ENCODE measurements at regions of chr3 and their contacts with region 1.

Region 1: DNA sequence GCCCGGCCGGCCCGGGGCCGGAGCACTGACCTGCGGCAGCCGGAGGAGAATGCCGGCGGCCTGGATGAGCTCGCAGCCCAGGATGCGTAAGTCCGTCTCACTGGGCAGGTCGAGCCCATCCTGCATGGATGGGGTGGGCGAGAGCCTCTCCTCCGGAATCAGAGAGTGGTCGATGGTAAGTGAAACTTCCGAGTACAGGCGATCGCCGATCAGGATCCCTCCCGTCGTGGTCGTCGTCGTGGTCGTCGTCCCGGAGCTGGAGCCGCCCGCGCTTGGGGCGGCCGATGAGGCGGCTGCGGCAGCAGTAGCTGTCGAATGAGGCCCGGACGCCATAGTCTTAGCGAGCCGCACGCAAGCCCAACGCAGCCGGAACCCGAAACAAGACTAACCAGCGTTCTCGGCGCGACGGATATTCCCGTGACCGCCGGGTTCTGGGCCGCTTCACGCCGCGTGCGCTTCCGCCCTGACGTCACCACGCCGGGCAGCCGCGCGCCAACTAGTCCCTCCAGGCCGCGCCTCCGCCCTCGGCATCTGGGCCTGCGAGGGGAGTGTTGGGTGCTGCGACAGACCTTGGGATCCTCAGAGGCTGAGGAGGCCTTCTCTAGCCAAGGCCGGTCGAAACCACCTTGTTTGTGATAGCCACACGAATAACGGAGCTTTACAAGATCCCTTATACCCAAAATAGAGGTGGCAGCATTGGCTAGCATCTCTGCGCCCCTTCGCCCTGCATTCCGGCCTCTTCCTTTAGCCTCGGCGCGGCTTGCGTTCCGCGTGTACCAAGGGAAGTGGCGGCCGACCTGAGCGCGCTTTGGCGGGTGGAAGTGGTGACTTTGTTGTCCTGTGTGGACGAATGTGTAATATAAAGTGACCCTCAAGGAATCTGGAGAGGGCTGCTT is at the start of gene CCNL1:
- DNase-seq: peak; percentile 95 to 96
- ATAC-seq: peak; percentile 78 to 82
- H3K4me3 ChIP-seq: peak within 1 kb of the TSS; percentile 79 to 98 (median 94)
- H3K27ac ChIP-seq: peak within 1 kb of the TSS; percentile 93 to 99 (median 98)
- H3K4me1 ChIP-seq: peaks cover 48% of the 10 kb centered on the region in 2 donors
- H3K27me3 ChIP-seq: no peaks in the 10 kb centered on the region
- CTCF ChIP-seq: peak in 2 of 5 experiments; percentile 10 to 11
- POLR2A ChIP-seq: peak; percentile 99
- total RNA-seq, gene CCNL1: 34.3 to 110 (median 41.3) TPM

Region 2: DNA sequence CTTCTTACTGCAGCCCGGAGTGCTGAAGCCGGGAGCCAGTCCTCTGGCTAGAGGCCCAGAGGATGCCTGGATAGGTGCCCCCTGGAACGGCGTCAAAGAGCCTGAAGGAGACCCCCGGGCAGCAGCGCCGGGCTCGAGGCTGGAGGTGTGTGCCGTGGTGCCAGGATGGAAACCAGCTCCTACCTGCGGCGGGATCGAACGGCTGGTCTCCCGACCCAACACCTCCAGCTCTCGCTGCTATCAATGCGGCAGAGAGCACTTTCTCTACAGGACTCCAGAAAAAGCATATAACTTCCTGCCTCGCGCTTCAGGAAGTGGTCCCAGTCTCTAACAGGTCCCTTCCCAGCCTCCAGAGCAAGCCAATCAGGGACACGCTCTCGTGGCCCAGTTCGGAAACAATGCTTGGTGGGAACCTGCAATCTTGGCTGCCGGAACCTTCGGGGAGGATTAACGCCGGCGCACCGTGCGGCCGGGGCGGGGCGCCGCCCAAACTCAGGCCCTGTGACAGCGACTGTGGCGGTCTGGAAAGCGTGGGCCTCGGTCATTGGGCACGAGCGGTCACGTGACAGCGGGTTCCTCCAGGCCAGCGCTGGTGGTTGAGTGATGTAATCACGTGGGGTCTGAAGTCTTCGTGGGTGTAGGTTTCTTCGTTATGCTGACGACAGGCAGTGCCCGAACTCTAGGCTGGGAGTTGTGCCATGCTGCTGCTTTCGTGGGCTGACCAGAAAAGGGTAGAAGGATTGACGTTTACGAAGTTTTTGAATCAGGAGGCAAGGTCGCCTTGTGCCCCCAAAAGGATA is 1305.7 kb before region 1 on chr3 and contains the start of gene SLC33A1:
- in situ Hi-C with region 1: loop called in 2 of 4 experiments (anchors 25 kb)
- intact Hi-C with region 1: loop called (anchors 10 kb)
- DNase-seq: peak; percentile 99
- ATAC-seq: peak; percentile 96 to 97
- H3K4me3 ChIP-seq: peak within 1 kb of the TSS; percentile 75 to 99 (median 87)
- H3K27ac ChIP-seq: peak within 1 kb of the TSS; percentile 95 to 96 (median 95)
- H3K4me1 ChIP-seq: peaks cover 36 to 37% of the 10 kb centered on the region in 2 donors
- H3K27me3 ChIP-seq: no peaks in the 10 kb centered on the region
- CTCF ChIP-seq: peak in 3 of 5 experiments; percentile 7 to 55 (median 30)
- POLR2A ChIP-seq: peak; percentile 67 to 75
- total RNA-seq, gene SLC33A1: 7.0 to 9.3 (median 8.2) TPM

Region 3: DNA sequence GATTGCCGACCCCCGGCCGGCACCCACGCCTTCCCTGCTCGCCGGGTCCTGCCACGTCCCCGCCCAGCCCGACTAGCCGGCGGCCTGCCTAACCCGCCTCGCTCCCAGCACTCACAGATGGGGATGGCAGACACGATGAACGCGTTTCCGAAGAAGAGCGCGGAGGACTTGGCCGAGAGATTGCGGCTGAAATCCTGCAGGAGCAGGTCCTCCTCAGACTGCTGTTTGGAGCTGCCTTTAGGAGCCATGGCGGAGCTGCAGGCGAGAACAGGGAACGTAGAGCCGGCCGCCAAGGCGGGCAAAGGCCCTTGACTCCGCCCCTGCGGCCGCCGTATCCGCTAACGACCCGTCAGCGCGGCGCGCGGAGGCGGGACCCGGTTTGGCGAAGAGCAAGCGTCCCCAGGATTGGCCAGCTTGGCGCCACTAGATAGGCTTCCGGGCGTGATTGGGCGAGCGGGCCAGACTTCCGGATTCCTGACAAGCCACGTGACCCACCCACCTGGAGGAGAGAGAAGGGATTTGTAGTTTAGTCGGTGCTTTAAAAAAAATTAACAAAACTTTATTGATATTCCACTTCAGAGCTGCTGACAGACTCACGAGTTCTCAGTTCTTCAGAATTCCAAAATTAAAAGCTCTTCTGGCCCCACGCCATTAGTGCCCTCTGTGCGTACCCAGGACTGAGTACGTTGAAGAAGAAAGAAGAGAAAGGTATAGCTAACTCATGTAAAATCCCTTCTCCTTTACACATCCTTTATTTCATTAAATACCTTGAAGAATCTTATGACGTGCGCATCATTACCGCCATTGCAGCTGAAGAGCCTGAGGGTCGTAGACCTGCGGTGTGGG is 604.9 kb before region 1 on chr3 and contains the start of gene SSR3:
- in situ Hi-C with region 1: no loop called
- intact Hi-C with region 1: loop called (anchors 5 kb)
- DNase-seq: peak; percentile 99
- ATAC-seq: peak; percentile 98
- H3K4me3 ChIP-seq: peak within 1 kb of the TSS; percentile 84 to 100 (median 88)
- H3K27ac ChIP-seq: peak within 1 kb of the TSS; percentile 85 to 97 (median 90)
- H3K4me1 ChIP-seq: peaks cover 22 to 27% of the 10 kb centered on the region in 2 donors
- H3K27me3 ChIP-seq: no peaks in the 10 kb centered on the region
- CTCF ChIP-seq: peak; percentile 34 to 65 (median 63)
- POLR2A ChIP-seq: peak; percentile 71 to 78
- total RNA-seq, gene SSR3: 50.9 to 91.5 (median 65.3) TPM

Region 4: DNA sequence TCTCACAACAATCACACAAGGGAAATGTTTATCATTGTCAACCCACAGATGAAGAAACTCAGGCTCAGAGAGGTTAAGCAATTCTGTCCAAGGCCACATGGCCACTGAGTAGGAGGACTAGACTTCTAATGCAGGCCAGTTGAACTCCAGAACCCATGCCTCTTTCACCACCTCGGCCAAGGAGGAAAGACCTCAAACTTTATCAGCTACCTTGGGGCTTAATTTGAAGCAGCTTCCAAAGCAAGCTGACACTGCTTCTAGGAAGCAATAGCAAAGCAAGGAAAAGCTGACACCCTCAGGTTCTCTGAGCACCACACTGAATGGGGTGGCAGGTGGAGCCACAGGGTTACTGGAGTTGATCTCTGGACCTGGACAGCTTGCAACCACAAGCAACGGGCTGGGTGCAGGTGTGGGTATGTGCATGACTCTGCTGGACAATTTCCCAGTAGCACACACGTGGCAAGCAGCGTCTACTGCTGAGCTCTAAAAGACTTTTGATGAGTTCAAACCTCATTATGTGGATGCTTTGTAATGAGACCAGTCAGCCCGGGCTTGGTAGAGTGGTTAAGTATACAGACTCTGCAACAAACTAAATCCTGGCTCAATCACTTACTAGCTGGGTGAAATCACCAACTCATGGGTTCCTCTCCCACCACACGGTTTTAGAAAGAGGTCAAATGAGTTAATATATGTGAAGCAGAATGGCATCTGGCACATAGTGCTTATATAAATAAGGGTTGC is 23.2 kb before region 1 on chr3:
- in situ Hi-C with region 1: no loop called
- intact Hi-C with region 1: loop called (anchors 2 kb)
- DNase-seq: peak; percentile 57 to 72
- ATAC-seq: peak; percentile 49 to 50
- H3K4me3 ChIP-seq: no peak overlapping the region
- H3K27ac ChIP-seq: peak overlapping the region; percentile 76 to 86 (median 82)
- H3K4me1 ChIP-seq: peaks cover 58 to 59% of the 10 kb centered on the region in 2 donors
- H3K27me3 ChIP-seq: no peaks in the 10 kb centered on the region
- CTCF ChIP-seq: no peak
- POLR2A ChIP-seq: no peak

Region 5: DNA sequence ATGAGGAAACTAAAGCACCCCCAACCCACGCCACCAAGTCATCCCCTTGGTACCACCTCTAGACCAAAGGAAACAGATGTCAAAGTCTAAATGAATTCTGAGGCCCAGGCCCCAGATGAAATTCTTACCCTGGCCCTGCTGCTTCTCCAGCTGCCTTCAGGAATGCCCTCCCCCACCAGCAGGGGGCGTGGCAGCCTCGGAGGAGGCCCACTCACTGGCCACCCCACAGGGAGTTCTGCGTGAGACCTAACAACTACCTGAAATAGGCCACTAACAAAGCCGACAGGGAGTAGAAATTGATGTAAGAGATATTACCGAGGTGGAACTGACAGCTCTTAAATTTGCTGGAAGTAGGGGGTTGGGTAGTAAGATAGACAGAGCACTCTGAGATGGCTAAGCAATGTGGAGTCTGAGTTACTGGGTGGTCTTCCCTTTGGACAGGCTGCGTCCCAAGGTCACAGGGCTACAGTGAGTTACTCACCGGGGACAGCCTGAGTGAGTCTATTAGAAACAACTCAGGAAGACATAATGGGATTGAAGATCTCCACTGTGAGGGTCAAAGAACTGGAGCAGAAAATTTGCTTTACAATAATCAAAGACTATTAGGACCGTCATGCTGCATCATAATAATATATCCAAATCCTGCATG is 705.5 kb after region 1 on chr3:
- in situ Hi-C with region 1: loop called in 1 of 4 experiments (anchors 25 kb)
- intact Hi-C with region 1: no loop called
- DNase-seq: no peak
- ATAC-seq: no peak
- H3K4me3 ChIP-seq: no peak overlapping the region
- H3K27ac ChIP-seq: no peak overlapping the region
- H3K4me1 ChIP-seq: no peaks in the 10 kb centered on the region
- H3K27me3 ChIP-seq: no peaks in the 10 kb centered on the region
- CTCF ChIP-seq: peak in 3 of 5 experiments; percentile 27 to 44 (median 37)
- POLR2A ChIP-seq: no peak